GM13976 (cell line): ENCODE measurements at regions of chr1 and their contacts with region 1.

Region 1: GRCh38 chr1:246699095-246699735 is 25.0 kb upstream of the SCCPDH start:
- DNase-seq: peak; percentile 90
- CTCF ChIP-seq: peak; percentile 75

Region 2: DNA sequence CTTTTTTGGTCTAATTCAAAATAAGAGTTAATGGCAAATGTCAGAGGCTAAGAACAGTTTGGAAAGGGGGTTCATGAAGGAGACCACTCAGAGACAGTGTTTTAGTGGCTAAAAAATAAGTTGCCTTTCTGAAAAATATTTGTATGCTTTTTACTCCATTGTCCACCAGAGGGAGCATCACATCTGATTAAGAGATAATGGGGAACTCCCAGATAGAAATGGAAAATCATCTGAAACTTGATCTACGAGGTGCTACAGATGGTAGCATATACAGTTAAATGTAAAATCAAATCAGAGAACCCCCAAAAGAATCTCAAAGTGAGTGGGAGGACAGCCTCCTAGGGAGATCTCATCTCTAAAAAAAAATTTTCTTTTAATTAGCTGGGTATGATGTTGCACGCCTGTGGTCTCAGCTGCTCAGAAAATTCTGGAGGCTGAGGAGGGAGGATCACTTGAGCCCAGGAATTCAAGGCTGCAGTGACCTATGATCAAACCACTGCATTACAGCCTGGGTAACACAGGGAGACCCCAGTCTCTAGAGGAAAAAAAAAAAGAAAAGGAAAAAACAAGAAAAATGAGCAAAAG is 201.8 kb before region 1 on chr1:
- in situ Hi-C with region 1: loop called (anchors 5 kb)
- DNase-seq: peak; percentile 74
- CTCF ChIP-seq: peak; percentile 52